Heart left ventricle (tissue), 16 donors: ENCODE measurements at regions of chr2 and their contacts with region 1.

Region 1: DNA sequence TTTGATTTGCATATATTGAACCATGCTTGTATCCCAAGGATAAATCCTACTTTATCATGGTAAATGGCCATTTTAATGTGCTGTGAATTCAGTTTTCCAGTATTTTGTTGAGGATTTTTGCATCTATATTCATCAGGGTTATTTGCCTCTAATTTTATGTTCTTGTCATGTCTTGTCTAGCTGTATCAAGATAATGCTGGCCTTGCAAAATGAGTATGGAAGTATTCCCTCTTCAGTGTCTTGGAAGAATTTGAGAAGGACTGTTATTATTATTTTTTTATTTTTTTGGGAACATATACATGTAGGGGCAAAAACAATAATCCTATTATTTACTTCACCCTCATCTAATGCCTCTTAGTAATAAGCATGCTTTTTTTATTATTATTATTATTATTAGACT is 398.0 kb upstream of the KCNH7 start:
- DNase-seq: no peak
- ATAC-seq: no peak
- H3K4me3 ChIP-seq: no peak overlapping the region
- H3K27ac ChIP-seq: no peak overlapping the region
- H3K4me1 ChIP-seq: no peaks in the 10 kb centered on the region
- H3K27me3 ChIP-seq: no peaks in the 10 kb centered on the region
- CTCF ChIP-seq: no peak
- POLR2A ChIP-seq: no peak

Region 2: DNA sequence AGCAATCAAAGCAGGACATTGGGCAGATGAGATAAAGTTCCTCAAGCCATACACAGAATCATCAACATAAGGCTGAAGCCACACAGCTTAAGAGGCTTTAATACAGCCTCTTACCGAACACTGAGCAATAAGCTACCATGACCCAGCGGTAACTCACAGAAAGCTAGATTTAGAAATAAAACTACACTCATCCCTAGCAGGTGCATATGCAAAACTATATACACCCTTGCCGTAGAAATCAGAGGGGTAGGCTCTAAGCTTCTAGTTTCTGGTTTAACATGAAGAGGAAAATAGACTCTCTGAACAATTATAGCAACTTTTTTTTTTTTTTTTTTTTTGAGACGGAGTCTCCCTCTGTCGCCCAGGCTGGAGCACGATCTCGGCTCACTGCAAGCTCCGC is 928.0 kb after region 1 on chr2:
- intact Hi-C with region 1: loop called in 1 of 10 experiments (anchors 5 kb)
- DNase-seq: no peak
- ATAC-seq: no peak
- H3K4me3 ChIP-seq: no peak overlapping the region
- H3K27ac ChIP-seq: no peak overlapping the region
- H3K4me1 ChIP-seq: no peaks in the 10 kb centered on the region
- H3K27me3 ChIP-seq: no peaks in the 10 kb centered on the region
- CTCF ChIP-seq: no peak
- POLR2A ChIP-seq: no peak